AG04450 (cell line): ENCODE measurements at regions of chr2 and their contacts with region 1.

Region 1: DNA sequence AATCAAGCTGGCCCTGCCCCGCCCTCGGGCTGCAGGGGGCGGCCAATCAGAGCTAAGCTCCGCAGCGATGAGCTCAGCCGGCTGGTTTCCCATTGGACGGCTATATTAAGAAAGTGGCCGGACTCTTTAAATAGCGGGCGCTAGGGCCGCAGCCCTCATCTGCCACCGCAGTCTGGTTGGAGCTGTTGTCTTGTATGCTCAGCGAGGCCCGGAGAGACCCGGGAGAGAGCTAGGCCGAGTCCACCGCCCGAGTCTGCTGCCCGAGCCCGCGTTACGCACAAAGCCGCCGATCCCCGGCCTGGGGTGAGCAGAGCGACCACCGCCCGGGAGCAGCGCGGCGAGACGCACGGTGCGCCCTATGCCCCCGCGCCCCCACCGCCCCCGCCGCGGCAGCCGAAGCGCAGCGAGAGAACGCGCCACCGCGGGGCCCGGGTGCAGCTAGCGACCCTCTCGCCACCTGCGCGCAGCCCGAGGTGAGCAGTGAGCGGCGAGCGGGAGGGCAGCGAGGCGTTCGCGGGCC is at the start of gene RHOB:
- DNase-seq: peak; percentile 96
- H3K4me3 ChIP-seq: peak within 1 kb of the TSS; percentile 91
- H3K27ac ChIP-seq: peak within 1 kb of the TSS; percentile 47
- H3K27me3 ChIP-seq: no peaks in the 10 kb centered on the region
- CTCF ChIP-seq: no peak
- polyA plus RNA-seq, gene RHOB: 45.5 and 47.7 TPM in 2 replicates

Region 2: DNA sequence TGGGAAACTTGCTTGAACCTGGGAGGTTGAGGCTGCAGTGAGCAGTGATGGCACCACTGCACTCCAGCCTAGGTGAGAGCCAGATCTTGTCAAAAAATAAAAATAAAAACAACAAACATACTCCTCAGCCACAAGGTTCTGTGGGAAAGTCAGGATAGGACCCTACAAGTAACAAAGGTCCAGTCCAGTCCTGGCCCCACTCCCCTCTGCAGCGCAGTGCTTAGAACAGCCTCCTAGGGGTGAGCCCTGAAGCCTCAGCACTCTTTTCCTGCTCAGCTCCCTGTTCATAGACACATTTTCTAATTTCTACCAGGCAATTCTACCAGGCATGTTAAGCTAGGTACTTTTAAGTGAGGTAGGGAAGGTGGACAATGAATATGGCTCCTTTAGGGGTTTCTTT is 199.9 kb before region 1 on chr2:
- CTCF ChIA-PET with region 1: no interaction called
- POLR2A ChIA-PET with region 1: no interaction called
- DNase-seq: no peak
- H3K4me3 ChIP-seq: no peak overlapping the region
- H3K27ac ChIP-seq: no peak overlapping the region
- H3K27me3 ChIP-seq: no peaks in the 10 kb centered on the region
- CTCF ChIP-seq: no peak

Region 3: GRCh38 chr2:20378792-20379519 is 68.0 kb before region 1 on chr2:
- CTCF ChIA-PET with region 1: interaction called, 20 read pairs
- POLR2A ChIA-PET with region 1: interaction called, 30 read pairs
- DNase-seq: peak; percentile 72
- H3K4me3 ChIP-seq: no peak overlapping the region
- H3K27ac ChIP-seq: peak overlapping the region; percentile 31
- H3K27me3 ChIP-seq: peaks cover 2% of the 10 kb centered on the region
- CTCF ChIP-seq: peak; percentile 93

Region 4: DNA sequence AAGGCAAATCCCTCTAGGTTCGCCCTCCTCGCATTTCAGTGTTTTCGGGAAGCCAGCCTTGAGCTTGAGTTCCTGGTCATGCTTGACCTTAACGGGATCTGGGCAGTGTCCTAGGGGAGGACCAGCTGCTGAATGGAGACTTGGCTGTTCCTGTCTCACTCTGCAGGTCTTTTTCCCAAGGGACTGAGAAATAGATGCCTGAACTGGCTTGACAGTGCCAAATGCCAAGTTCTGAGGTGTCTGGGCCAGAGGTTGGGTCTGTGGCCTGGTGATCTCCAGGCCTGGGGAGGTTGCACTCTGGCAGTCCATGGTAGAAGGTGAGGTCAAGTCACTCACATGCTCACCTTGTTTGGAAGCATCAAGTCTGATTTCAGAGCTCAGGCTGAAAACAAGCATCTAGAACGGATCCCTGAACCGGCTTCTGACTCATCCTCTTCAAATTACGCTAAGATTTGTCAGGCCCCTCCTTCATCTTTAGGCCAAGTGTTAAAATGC is 19.5 kb after region 1 on chr2:
- CTCF ChIA-PET with region 1: no interaction called
- POLR2A ChIA-PET with region 1: interaction called, 10 read pairs
- DNase-seq: no peak
- H3K4me3 ChIP-seq: no peak overlapping the region
- H3K27ac ChIP-seq: no peak overlapping the region
- H3K27me3 ChIP-seq: no peaks in the 10 kb centered on the region
- CTCF ChIP-seq: no peak

Region 5: GRCh38 chr2:20501974-20502373 is 55.0 kb after region 1 on chr2:
- CTCF ChIA-PET with region 1: interaction called, 4 read pairs
- POLR2A ChIA-PET with region 1: interaction called, 33 read pairs
- DNase-seq: peak; percentile 94
- H3K4me3 ChIP-seq: no peak overlapping the region
- H3K27ac ChIP-seq: peak overlapping the region; percentile 81
- H3K27me3 ChIP-seq: peaks cover 3% of the 10 kb centered on the region
- CTCF ChIP-seq: no peak

Region 6: DNA sequence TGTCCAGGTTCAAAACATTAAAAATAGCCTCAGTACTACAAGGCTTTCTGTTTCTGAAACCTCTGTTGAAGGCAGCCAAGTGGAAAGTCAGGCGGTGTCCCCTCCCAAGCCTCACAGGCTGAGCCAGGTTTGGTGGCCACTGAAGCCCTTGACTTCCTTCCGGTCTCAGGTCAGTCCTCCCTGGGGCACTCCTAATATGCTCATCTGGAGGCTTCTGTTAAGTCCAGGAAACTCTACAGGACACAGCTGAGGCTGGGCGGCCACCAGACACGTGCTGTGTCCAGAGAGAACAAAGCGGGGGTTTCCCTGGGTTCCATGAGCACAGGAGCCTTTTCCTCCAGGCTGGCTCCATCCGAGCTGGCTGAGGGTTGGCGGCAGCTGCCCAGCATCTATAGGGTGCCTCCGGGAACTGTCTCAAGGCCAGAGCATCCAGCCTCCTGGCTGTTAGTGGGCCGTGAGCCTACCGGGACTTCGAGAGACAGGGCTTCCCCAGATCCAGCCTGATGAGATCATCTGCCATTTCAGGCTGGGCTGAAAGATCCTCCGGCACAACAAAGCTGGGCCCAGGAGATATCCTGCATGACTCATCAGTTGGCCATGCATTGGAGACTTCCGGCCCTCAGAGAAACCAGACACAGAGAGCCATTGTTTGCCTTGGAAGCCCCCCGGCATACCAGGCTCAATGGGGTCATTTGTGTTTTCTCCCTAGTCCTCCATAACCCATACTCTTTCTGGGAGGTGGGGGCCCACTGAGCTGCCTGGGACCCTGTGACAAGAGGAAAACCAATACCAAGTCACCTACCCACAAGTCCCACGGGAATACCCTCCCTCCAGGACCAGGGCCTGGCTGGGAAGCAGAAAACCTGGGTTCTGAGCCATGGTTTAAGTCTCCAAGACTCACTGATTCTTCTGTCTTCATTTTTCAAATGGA is 132.2 kb after region 1 on chr2:
- CTCF ChIA-PET with region 1: interaction called, 3 read pairs
- POLR2A ChIA-PET with region 1: interaction called, 48 read pairs
- DNase-seq: peak; percentile 95
- H3K4me3 ChIP-seq: no peak overlapping the region
- H3K27ac ChIP-seq: peak overlapping the region; percentile 82
- H3K27me3 ChIP-seq: no peaks in the 10 kb centered on the region
- CTCF ChIP-seq: no peak

Region 7: GRCh38 chr2:20617892-20618467 is 171.0 kb after region 1 on chr2:
- CTCF ChIA-PET with region 1: interaction called, 11 read pairs
- POLR2A ChIA-PET with region 1: interaction called, 68 read pairs
- DNase-seq: peak; percentile 98
- H3K4me3 ChIP-seq: no peak overlapping the region
- H3K27ac ChIP-seq: peak overlapping the region; percentile 94
- H3K27me3 ChIP-seq: no peaks in the 10 kb centered on the region
- CTCF ChIP-seq: peak; percentile 61

Region 8: DNA sequence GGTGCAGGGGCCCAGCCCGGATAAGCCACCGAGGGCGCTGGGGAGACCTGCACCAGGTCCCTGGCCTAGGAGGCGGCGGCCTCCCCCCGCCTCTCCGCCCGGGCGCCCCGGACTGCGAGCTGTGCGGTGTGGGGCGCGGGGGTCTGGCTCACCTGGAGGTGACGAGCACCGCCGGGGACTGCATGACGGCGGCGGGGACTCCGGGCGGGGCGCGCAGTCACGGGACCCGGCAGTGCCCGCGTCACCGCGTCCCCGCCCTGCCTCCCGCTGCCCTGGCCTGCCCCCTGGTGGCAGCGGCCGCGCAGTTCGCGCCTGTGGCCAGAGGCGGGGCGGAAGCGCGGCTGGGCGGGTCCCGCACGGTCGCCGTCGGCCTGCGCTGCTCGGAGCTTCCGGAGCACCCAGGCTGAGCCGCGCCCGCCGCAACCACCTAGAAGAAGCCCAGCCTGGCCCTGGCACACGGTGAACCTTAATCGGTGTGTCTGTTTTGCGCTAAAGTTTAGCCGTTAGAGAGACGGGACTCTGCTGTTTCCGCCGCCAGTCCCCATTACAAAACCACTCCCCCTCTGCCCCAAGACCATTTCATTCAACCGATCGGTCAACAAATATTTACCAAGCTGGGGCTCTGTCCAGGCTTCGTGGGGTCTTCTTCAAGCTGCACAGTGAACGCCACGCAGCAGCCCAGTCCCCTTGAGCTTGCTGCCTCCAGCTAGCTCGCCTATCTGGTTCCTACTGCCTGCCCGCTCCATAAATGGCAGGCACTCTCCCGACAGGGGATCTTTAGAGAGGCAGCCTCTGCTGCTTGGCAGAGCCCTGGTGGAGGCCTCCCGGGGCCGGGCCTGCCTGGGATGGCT is 204.1 kb after region 1 on chr2 and contains the start of gene HS1BP3:
- CTCF ChIA-PET with region 1: interaction called, 26 read pairs
- POLR2A ChIA-PET with region 1: interaction called, 15 read pairs
- DNase-seq: no peak
- H3K4me3 ChIP-seq: peak within 1 kb of the TSS; percentile 92
- H3K27ac ChIP-seq: peak within 1 kb of the TSS; percentile 3
- H3K27me3 ChIP-seq: peaks cover 15% of the 10 kb centered on the region
- CTCF ChIP-seq: peak; percentile 54
- polyA plus RNA-seq, gene HS1BP3: 14.2 and 16.1 TPM in 2 replicates